OCI-LY7 (cell line): ENCODE measurements at regions of chr4 and their contacts with region 1.

Region 1: DNA sequence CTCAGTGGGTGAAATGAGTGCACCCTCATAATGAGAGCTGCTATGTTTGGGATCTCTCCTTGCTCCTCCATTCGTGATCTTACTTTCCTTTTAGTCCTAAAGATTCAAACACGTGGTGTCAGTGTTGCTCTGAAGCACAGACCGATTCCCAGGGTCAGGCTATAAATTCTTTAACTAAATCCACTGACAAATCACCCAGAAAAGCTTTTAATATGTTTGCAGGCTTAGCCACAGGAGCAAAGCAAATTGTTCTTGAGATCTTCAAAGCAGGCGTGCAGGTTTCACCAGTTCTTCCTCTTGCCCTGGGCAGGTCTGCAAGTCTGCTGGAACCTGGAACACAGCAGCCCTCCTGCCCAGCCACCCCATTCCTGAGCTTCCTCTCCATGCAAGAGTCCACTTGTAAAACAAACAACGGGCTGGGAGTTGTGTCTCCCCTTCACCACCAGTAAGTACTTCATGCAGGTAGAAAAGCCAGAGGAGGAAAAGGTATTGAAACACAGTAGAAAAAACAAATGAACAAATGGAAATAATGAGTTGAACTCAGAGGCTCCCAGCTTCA is 70.1 kb upstream of the ENPP6 start:
- DNase-seq: peak; percentile 55
- H3K4me3 ChIP-seq: peak overlapping the region; percentile 58
- H3K27ac ChIP-seq: peak overlapping the region; percentile 96
- H3K4me1 ChIP-seq: peaks cover 99% of the 10 kb centered on the region
- CTCF ChIP-seq: peak; percentile 39; the same call in 1 of the 2 replicates

Region 2: GRCh38 chr4:184143770-184144564 is 143.8 kb before region 1 on chr4:
- CTCF ChIA-PET with region 1: no interaction called
- POLR2A ChIA-PET with region 1: no interaction called
- intact Hi-C with region 1: no loop called
- DNase-seq: no peak
- H3K4me3 ChIP-seq: no peak overlapping the region
- H3K27ac ChIP-seq: no peak overlapping the region
- H3K4me1 ChIP-seq: no peaks in the 10 kb centered on the region
- CTCF ChIP-seq: peak; percentile 44

Region 3: GRCh38 chr4:184237612-184238011 is 50.2 kb before region 1 on chr4:
- CTCF ChIA-PET with region 1: no interaction called
- POLR2A ChIA-PET with region 1: no interaction called
- intact Hi-C with region 1: no loop called
- DNase-seq: no peak
- H3K4me3 ChIP-seq: no peak overlapping the region
- H3K27ac ChIP-seq: no peak overlapping the region
- H3K4me1 ChIP-seq: no peaks in the 10 kb centered on the region
- CTCF ChIP-seq: no peak

Region 4: GRCh38 chr4:184250795-184251669 is 36.7 kb before region 1 on chr4:
- CTCF ChIA-PET with region 1: no interaction called
- POLR2A ChIA-PET with region 1: no interaction called
- intact Hi-C with region 1: no loop called
- DNase-seq: peak; percentile 77
- H3K4me3 ChIP-seq: no peak overlapping the region
- H3K27ac ChIP-seq: no peak overlapping the region
- H3K4me1 ChIP-seq: no peaks in the 10 kb centered on the region
- CTCF ChIP-seq: peak; percentile 88

Region 5: GRCh38 chr4:184298254-184298653 is 10.5 kb after region 1 on chr4:
- CTCF ChIA-PET with region 1: no interaction called
- POLR2A ChIA-PET with region 1: interaction called, 12 read pairs
- intact Hi-C with region 1: no loop called
- DNase-seq: no peak
- H3K4me3 ChIP-seq: no peak overlapping the region
- H3K27ac ChIP-seq: no peak overlapping the region
- H3K4me1 ChIP-seq: peaks cover 5% of the 10 kb centered on the region
- CTCF ChIP-seq: no peak

Region 6: GRCh38 chr4:184310171-184310567 is 22.4 kb after region 1 on chr4:
- CTCF ChIA-PET with region 1: interaction called, 3 read pairs
- POLR2A ChIA-PET with region 1: interaction called, 15 read pairs
- intact Hi-C with region 1: loop called (anchors 1 kb)
- DNase-seq: peak; percentile 73
- H3K4me3 ChIP-seq: no peak overlapping the region
- H3K27ac ChIP-seq: no peak overlapping the region
- H3K4me1 ChIP-seq: peaks cover 56% of the 10 kb centered on the region
- CTCF ChIP-seq: peak; percentile 76

Region 7: GRCh38 chr4:184329659-184330400 is 42.1 kb after region 1 on chr4:
- CTCF ChIA-PET with region 1: interaction called, 7 read pairs
- POLR2A ChIA-PET with region 1: interaction called, 44 read pairs
- intact Hi-C with region 1: loop called (anchors 1 kb)
- DNase-seq: no peak
- H3K4me3 ChIP-seq: no peak overlapping the region
- H3K27ac ChIP-seq: peak overlapping the region; percentile 82
- H3K4me1 ChIP-seq: peaks cover 77% of the 10 kb centered on the region
- CTCF ChIP-seq: no peak

Region 8: DNA sequence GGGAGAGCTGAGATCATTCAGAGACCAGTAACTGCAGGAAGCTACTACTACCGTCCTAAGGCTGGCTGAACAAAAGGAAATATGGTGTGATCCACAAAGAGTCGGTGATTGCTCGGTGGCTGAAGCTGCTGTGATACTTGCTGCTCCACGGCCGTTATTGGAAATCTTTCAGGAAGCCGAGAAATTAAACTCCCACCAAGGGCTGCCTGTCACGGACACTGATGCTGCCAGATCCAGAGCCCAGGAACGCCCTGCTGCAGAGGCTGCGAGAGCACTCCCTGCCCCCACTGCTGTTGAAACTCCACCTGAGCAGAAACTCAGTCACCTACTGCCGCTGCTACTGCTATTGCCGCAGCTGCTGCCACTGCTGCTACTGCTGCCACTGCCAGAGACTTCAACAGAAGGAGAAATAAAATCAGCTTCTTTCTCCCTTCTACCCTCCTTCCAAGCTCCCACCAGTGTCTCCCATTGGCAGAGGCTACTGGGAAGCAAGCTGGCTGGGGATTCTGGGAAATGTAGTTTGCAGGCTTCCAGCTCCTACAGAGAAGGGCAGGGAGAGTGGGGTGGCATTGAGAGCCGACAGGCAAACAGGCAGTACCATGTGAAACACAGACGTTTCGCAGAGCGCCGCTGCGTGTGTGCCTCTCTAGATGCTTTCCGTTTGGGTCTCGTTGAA is 55.9 kb after region 1 on chr4:
- CTCF ChIA-PET with region 1: no interaction called
- POLR2A ChIA-PET with region 1: interaction called, 46 read pairs
- intact Hi-C with region 1: loop called (anchors 1 kb)
- DNase-seq: peak; percentile 64
- H3K4me3 ChIP-seq: peak overlapping the region; percentile 61
- H3K27ac ChIP-seq: peak overlapping the region; percentile 26
- H3K4me1 ChIP-seq: peaks cover 66% of the 10 kb centered on the region
- CTCF ChIP-seq: no peak

Region 9: GRCh38 chr4:184351560-184352451 is 64.0 kb after region 1 on chr4:
- CTCF ChIA-PET with region 1: no interaction called
- POLR2A ChIA-PET with region 1: interaction called, 46 read pairs
- intact Hi-C with region 1: loop called (anchors 1 kb)
- DNase-seq: no peak
- H3K4me3 ChIP-seq: no peak overlapping the region
- H3K27ac ChIP-seq: no peak overlapping the region
- H3K4me1 ChIP-seq: peaks cover 69% of the 10 kb centered on the region
- CTCF ChIP-seq: no peak